ENCODE measurements at regions of chr5 and their contacts with region 1.

Region 1: GRCh38 chr5:128984480-128984879 is 19.2 kb downstream of the SLC27A6 start:
- DNase-seq: no peak
- ATAC-seq: no peak
- H3K4me3 ChIP-seq: no peak overlapping the region
- H3K27ac ChIP-seq: no peak overlapping the region
- H3K4me1 ChIP-seq: no peaks in the 10 kb centered on the region
- H3K27me3 ChIP-seq: 0 out of 5 replicates have a peak, but pooled peaks cover 0 to 2% of the 10 kb centered on the region in 2 experiments
- CTCF ChIP-seq: no peak
- EP300 ChIP-seq: no peak
- POLR2A ChIP-seq: no peak
- RAD21 ChIP-seq: no peak

Region 2: DNA sequence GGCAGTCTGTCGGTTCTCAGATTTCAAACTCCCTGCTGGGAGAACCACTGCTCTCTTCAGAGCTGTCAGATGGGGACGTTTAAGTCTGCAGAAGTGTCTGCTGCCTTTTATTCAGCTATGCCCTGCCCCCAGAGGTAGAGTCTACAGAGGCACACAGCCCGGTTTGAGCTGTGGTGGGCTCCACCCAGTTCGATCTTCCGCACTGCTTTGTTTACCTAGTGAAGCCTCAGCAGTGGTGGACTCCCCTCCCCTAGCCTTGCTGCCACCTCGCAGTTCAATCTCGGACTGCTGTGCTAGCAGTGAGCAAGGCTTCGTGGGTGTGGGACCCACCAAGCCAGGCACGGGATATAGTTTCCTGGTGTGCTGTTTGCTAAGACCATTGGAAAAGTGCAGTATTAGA is 11.2 kb before region 1 on chr5:
- CTCF ChIA-PET with region 1: no interaction called
- POLR2A ChIA-PET with region 1: no interaction called
- in situ Hi-C with region 1: no loop called
- intact Hi-C with region 1: no loop called
- DNase-seq: no peak
- ATAC-seq: no peak
- H3K4me3 ChIP-seq: no peak overlapping the region
- H3K27ac ChIP-seq: no peak overlapping the region
- H3K4me1 ChIP-seq: no peaks in the 10 kb centered on the region
- H3K27me3 ChIP-seq: no peaks in the 10 kb centered on the region; a peak in 1 of 5 replicates
- CTCF ChIP-seq: no peak
- EP300 ChIP-seq: no peak
- POLR2A ChIP-seq: no peak
- RAD21 ChIP-seq: no peak

Region 3: GRCh38 chr5:129074903-129075302 is 90.4 kb after region 1 on chr5:
- CTCF ChIA-PET with region 1: no interaction called
- POLR2A ChIA-PET with region 1: no interaction called
- in situ Hi-C with region 1: loop called (anchors 5 kb)
- intact Hi-C with region 1: no loop called
- DNase-seq: no peak
- ATAC-seq: no peak
- H3K4me3 ChIP-seq: no peak overlapping the region
- H3K27ac ChIP-seq: no peak overlapping the region
- H3K4me1 ChIP-seq: peaks cover 0 to 21% of the 10 kb centered on the region in 2 experiments; a peak in 3 of 5 replicates
- H3K27me3 ChIP-seq: no peaks in the 10 kb centered on the region
- CTCF ChIP-seq: no peak
- EP300 ChIP-seq: no peak
- POLR2A ChIP-seq: no peak
- RAD21 ChIP-seq: no peak

Measured in K562 (cell line).